Sigmoid colon (tissue), 7 donors: ENCODE measurements at regions of chrX and their contacts with region 1.

Region 1: GRCh38 chrX:75278991-75279390 is 5.1 kb downstream of the UPRT start:
- DNase-seq: no peak
- H3K4me3 ChIP-seq: no peak overlapping the region
- H3K27ac ChIP-seq: no peak overlapping the region
- H3K4me1 ChIP-seq: peaks cover 0 to 29% (median 16%) of the 10 kb centered on the region in 4 donors
- H3K27me3 ChIP-seq: no peaks in the 10 kb centered on the region
- CTCF ChIP-seq: no peak
- EP300 ChIP-seq: no peak
- POLR2A ChIP-seq: no peak

Region 2: GRCh38 chrX:75337525-75337924 is 58.5 kb after region 1 on chrX:
- intact Hi-C with region 1: no loop called
- DNase-seq: no peak
- H3K4me3 ChIP-seq: no peak overlapping the region
- H3K27ac ChIP-seq: no peak overlapping the region
- H3K4me1 ChIP-seq: no peaks in the 10 kb centered on the region
- H3K27me3 ChIP-seq: no peaks in the 10 kb centered on the region
- CTCF ChIP-seq: no peak
- EP300 ChIP-seq: no peak
- POLR2A ChIP-seq: no peak

Region 3: DNA sequence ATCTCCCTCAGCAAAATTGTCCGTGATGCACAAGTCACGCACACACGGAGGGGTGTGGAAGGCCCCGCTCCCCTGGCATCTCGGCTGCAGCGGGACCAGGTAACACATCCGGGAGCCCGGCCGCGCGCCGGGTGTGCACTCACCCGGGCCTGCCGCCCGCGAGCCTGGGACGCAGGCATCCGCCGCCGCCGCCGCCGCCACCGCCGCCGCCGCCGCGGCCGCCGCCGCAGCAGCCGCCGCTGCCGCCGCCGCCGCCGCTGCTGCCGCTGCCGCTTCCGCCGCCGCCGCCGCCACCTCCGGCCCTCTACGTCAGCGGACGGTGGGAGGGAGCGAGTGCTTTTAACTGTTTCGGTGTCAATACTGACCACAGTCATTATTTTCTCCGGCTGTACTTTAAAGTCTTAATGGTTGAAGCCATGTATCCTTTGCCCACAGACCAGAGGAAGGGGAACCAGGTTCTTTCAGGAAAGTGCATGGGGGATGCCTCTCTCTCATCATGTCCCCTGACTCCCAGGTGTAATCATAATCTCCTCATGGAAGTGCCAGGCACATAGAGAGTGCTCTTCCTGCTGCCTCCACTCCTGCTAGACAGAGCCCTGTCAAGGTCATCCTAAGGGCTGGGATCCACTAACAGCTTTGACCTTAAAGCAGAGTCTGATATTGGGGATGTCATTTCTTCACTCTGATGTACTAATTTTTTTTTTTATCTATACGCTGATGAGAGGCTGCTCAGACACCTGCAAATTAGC is 468.1 kb after region 1 on chrX:
- intact Hi-C with region 1: loop called (anchors 10 kb)
- DNase-seq: no peak
- H3K4me3 ChIP-seq: peak overlapping the region; percentile 31 to 52 (median 49)
- H3K27ac ChIP-seq: peak overlapping the region; percentile 62 to 68 (median 63)
- H3K4me1 ChIP-seq: no peaks in the 10 kb centered on the region
- H3K27me3 ChIP-seq: no peaks in the 10 kb centered on the region
- CTCF ChIP-seq: no peak
- EP300 ChIP-seq: no peak
- POLR2A ChIP-seq: no peak